Activated CD8-positive, alpha-beta T cell treated with anti-CD3 and anti-CD28 coated beads for 36 hours (primary cell): ENCODE measurements at regions of chr1 and their contacts with region 1.

Region 1: DNA sequence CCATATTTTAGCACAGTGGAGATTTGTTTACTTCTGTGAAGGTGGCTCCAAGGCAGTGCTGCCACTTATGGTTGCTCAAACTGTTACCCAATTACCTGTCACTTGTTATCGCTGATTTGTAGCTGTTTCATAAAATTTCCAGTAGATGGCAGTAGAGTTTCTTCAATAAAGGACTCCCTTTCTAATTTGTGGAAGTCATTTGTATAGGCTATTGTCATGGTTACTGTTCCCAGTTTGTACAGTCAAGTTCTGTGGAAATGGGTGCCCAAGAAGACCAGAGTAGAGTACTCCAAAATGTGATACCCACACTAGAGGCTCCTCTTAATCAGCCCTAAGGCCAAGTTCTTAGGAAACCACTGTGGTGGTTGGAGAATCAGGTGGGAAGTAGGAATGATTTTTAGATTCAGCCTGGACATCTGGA is 186.1 kb downstream of the CLEC20A start:
- DNase-seq: no peak
- ATAC-seq: peak; percentile 51
- H3K4me3 Mint-ChIP-seq: no peak overlapping the region
- H3K27ac Mint-ChIP-seq: no peak overlapping the region
- H3K4me1 Mint-ChIP-seq: no peaks in the 10 kb centered on the region
- H3K27me3 Mint-ChIP-seq: peaks cover 5% of the 10 kb centered on the region
- CTCF ChIP-seq: peak; percentile 67

Region 2: GRCh38 chr1:178238722-178239510 is 71.8 kb before region 1 on chr1:
- CTCF ChIA-PET with region 1: no interaction called
- POLR2A ChIA-PET with region 1: no interaction called
- intact Hi-C with region 1: no loop called
- DNase-seq: no peak
- ATAC-seq: no peak
- H3K4me3 Mint-ChIP-seq: no peak overlapping the region
- H3K27ac Mint-ChIP-seq: no peak overlapping the region
- H3K4me1 Mint-ChIP-seq: no peaks in the 10 kb centered on the region
- H3K27me3 Mint-ChIP-seq: no peaks in the 10 kb centered on the region
- CTCF ChIP-seq: no peak

Region 3: DNA sequence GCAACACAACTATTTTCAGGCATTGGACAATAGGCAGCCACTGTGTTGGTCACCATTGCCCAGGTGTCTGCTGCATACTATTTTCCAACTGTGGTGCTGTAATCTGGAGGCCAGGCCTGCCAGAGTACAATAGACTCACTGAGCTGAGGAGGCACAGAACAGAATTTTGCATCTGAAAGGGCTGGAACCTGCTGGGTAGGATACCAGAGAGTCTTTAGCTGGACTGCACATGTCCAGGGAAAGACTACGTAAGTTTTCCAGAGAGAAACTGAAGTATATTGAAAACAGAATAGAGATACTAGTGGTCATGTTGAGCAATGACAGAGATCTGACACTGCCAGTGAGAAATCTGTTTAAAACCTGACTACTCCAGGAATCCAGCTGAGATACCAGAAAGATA is 16.0 kb before region 1 on chr1:
- CTCF ChIA-PET with region 1: interaction called, 50 read pairs
- POLR2A ChIA-PET with region 1: no interaction called
- intact Hi-C with region 1: no loop called
- DNase-seq: no peak
- ATAC-seq: no peak
- H3K4me3 Mint-ChIP-seq: no peak overlapping the region
- H3K27ac Mint-ChIP-seq: no peak overlapping the region
- H3K4me1 Mint-ChIP-seq: no peaks in the 10 kb centered on the region
- H3K27me3 Mint-ChIP-seq: peaks cover 3% of the 10 kb centered on the region
- CTCF ChIP-seq: no peak